ENCODE measurements at regions of chr14 and their contacts with region 1.

Region 1: GRCh38 chr14:72926292-72927028 is at the start of gene DCAF4:
- DNase-seq: peak; percentile 76 to 97 (median 96)
- H3K4me3 ChIP-seq: peak within 1 kb of the TSS; percentile 59 to 98 (median 86)
- H3K27ac ChIP-seq: peak within 1 kb of the TSS in 33 of 59 donors; percentile 12 to 71 (median 44)
- H3K27me3 ChIP-seq: no peaks in the 10 kb centered on the region
- CTCF ChIP-seq: peak in 9 of 56 donors; percentile 3 to 36 (median 13)
- total RNA-seq, gene DCAF4: 7.9 to 32.3 (median 20.1) TPM

Region 2: DNA sequence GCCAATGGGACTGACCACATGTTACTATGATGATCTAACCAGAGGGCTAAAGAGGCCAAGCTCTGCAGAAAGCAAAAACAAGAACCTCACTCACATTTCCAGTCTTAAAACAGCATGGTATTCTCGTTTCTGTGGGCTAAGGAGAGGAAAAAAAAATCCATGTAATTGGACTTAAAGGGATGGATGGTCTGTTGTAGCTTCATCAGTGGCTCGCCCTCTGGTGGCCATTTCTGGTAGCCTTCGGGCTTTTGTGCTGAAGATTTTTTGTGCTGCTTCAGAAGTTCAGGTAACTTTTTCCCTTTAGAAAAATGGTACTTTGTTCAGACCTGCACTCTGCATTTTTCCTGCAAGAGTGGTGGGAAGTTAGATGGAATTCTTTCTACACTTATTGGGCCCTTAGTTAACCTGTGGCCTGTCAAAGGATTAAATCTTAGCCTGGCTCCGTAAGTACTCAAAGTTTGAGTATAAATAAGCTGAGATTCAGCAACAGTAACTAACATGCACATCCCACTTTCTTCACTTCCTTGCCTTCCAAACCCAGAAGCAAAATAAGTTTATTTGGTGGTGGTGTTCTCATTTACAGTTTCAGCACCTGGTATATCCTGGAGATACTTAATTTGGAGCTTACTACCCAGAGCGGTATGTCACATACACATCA is 22.1 kb after region 1 on chr14:
- intact Hi-C with region 1: no loop called
- DNase-seq: peak; percentile 66 to 88 (median 76)
- H3K4me3 ChIP-seq: no peak overlapping the region
- H3K27ac ChIP-seq: no peak overlapping the region
- H3K27me3 ChIP-seq: no peaks in the 10 kb centered on the region
- CTCF ChIP-seq: peak; percentile 72 to 97 (median 89)

Region 3: GRCh38 chr14:72965249-72965648 is 38.8 kb after region 1 on chr14:
- intact Hi-C with region 1: no loop called
- DNase-seq: no peak
- H3K4me3 ChIP-seq: no peak overlapping the region
- H3K27ac ChIP-seq: no peak overlapping the region
- H3K27me3 ChIP-seq: no peaks in the 10 kb centered on the region
- CTCF ChIP-seq: no peak

Region 4: GRCh38 chr14:73026845-73027542 is 100.5 kb after region 1 on chr14 and contains the start of gene ZFYVE1:
- intact Hi-C with region 1: loop called in 1 of 2 experiments (anchors 2 kb)
- DNase-seq: peak; percentile 95 to 99 (median 98)
- H3K4me3 ChIP-seq: peak within 1 kb of the TSS; percentile 65 to 91 (median 81)
- H3K27ac ChIP-seq: peak within 1 kb of the TSS in 57 of 59 donors; percentile 11 to 94 (median 85)
- H3K27me3 ChIP-seq: no peaks in the 10 kb centered on the region
- CTCF ChIP-seq: peak in 37 of 56 donors; percentile 8 to 61 (median 32)
- total RNA-seq, gene ZFYVE1: 21.3 to 38.9 (median 28.9) TPM

Measured in dorsolateral prefrontal cortex (tissue), 120 donors.